Ascending aorta (tissue), 2 donors: ENCODE measurements at regions of chr20 and their contacts with region 1.

Region 1: DNA sequence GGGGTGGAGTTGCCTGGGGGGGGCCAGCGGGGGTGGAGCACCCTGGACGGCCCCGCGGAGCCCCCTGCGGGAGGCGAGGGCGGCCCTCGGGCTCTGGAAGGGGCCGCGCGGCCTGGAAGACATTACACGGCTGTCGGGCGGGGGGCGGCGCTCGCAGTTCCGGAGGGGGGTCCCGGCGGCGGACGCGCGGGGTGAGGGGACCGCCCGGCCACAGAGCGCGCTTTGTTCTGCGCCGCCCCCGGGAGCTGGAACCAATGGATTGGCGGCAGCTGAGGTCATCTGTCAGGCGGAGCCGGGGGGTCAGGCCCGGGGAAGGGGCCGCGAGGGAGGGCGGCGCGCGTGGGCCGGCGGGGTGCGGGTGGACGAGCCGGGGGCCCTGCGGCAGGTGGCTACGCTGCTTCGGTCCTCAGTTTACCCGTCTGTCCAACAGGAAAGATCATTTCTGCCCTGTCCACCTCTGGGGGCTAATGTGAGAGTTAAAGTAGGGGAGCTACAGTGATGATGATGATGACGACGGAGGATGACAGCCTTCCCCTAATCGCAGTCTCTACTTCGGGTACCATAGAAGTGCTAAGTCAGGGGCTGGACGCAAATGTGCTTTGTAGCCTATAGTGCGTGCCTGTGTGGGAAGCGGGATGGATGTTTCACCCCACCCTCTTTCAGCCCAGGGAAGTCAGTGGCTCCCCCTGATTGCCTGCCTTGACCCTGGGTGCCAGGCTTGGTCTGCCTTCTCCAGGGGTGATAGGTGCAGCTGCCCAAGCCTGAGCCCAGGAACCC is 10.4 kb downstream of the SRXN1 start:
- DNase-seq: no peak
- H3K4me3 ChIP-seq: peak overlapping the region; percentile 24 to 60
- H3K27ac ChIP-seq: no peak overlapping the region
- H3K4me1 ChIP-seq: peaks cover 2 to 3% of the 10 kb centered on the region in 2 donors
- H3K27me3 ChIP-seq: no peaks in the 10 kb centered on the region
- CTCF ChIP-seq: no peak

Region 2: GRCh38 chr20:362271-363254 is 280.0 kb before region 1 on chr20:
- intact Hi-C with region 1: loop called (anchors 5 kb)
- DNase-seq: peak; percentile 64 to 82
- H3K4me3 ChIP-seq: no peak overlapping the region
- H3K27ac ChIP-seq: no peak overlapping the region
- H3K4me1 ChIP-seq: peaks cover 2 to 3% of the 10 kb centered on the region in 2 donors
- H3K27me3 ChIP-seq: no peaks in the 10 kb centered on the region
- CTCF ChIP-seq: peak in 2 of 3 experiments; percentile 10 to 23

Region 3: DNA sequence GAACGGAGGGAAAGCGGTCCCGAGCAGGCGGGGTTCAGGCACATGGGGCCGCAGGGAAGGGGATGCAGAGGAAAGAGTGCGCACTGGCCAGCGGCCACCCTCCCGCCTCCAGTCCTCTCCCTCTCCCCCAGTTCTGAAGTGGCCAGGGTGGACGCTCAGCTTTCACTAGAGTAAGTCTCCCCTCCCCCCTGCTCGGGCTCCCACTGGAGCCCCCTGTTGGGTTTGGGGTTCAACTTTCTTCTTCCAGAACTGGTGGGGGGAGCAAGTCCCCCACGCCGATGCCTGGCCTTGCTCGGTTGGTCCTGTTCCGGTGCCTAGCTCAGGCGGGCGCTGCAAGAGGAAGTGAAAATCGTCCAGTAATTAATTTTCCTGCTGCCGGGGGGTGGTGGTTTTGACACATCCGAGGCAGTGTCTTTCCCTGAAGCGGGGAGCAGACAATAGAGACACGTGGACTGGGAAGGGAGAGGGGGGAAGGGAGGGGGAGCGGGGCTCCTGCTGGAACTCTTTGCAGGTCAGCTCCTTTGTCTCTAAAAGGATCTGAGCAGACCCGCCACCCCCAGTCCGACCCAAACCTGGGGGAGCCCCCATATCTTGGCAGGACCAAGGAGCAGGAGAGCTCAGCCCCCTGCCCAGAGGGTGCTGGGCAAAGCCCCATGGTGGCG is 33.9 kb after region 1 on chr20:
- intact Hi-C with region 1: no loop called
- DNase-seq: no peak
- H3K4me3 ChIP-seq: no peak overlapping the region
- H3K27ac ChIP-seq: no peak overlapping the region
- H3K4me1 ChIP-seq: peaks cover 0 to 5% of the 10 kb centered on the region in 2 donors
- H3K27me3 ChIP-seq: peaks cover 6% of the 10 kb centered on the region
- CTCF ChIP-seq: no peak